Ovary (tissue), 10 donors: ENCODE measurements at regions of chr1 and their contacts with region 1.

Region 1: GRCh38 chr1:111755331-111756123 is at the start of gene DDX20:
- DNase-seq: peak; percentile 90 to 95 (median 93)
- H3K4me3 ChIP-seq: peak within 1 kb of the TSS; percentile 88
- H3K27ac ChIP-seq: peak within 1 kb of the TSS; percentile 83 to 97
- H3K4me1 ChIP-seq: peaks cover 1% of the 10 kb centered on the region
- H3K27me3 ChIP-seq: no peaks in the 10 kb centered on the region
- CTCF ChIP-seq: peak; percentile 96 to 99 (median 97)
- EP300 ChIP-seq: no peak
- POLR2A ChIP-seq: peak; percentile 60
- total RNA-seq, gene DDX20: 10.6 to 26.9 (median 14.5) TPM

Region 2: GRCh38 chr1:111507411-111508201 is 247.9 kb before region 1 on chr1:
- intact Hi-C with region 1: loop called in 3 of 4 experiments (anchors 5 kb)
- DNase-seq: peak in 4 of 5 donors; percentile 70 to 81 (median 74)
- H3K4me3 ChIP-seq: peak overlapping the region; percentile 25
- H3K27ac ChIP-seq: peak overlapping the region; percentile 93 to 96
- H3K4me1 ChIP-seq: peaks cover 8% of the 10 kb centered on the region
- H3K27me3 ChIP-seq: no peaks in the 10 kb centered on the region
- CTCF ChIP-seq: no peak
- EP300 ChIP-seq: no peak
- POLR2A ChIP-seq: no peak

Region 3: GRCh38 chr1:111516005-111516535 is 239.5 kb before region 1 on chr1:
- intact Hi-C with region 1: loop called in 1 of 4 experiments (anchors 5 kb)
- DNase-seq: peak; percentile 64 to 72 (median 69)
- H3K4me3 ChIP-seq: peak overlapping the region; percentile 25
- H3K27ac ChIP-seq: peak overlapping the region; percentile 44 to 53
- H3K4me1 ChIP-seq: peaks cover 13% of the 10 kb centered on the region
- H3K27me3 ChIP-seq: no peaks in the 10 kb centered on the region
- CTCF ChIP-seq: peak in 1 of 3 donors; percentile 36
- EP300 ChIP-seq: no peak
- POLR2A ChIP-seq: no peak

Region 4: DNA sequence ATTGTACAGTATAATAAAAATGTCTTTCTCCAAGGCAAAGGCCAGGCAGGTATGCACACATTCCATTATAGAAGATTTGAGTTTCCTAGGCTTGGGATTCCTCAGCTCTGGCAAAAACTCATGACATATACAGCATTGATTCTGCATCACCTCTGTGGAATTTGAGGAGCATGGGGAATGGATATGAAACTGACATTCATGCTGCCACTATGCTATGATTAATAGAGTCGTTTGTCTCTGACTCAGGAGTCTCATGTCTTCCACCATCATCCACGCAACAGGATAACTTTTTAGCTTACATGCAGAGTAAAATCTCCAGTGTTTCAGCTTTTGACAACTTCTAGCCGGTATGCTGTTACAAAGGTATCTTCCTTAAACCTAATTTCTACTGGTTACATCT is 202.3 kb before region 1 on chr1:
- intact Hi-C with region 1: no loop called
- DNase-seq: no peak
- H3K4me3 ChIP-seq: no peak overlapping the region
- H3K27ac ChIP-seq: no peak overlapping the region
- H3K4me1 ChIP-seq: no peaks in the 10 kb centered on the region
- H3K27me3 ChIP-seq: no peaks in the 10 kb centered on the region
- CTCF ChIP-seq: no peak
- EP300 ChIP-seq: no peak
- POLR2A ChIP-seq: no peak

Region 5: DNA sequence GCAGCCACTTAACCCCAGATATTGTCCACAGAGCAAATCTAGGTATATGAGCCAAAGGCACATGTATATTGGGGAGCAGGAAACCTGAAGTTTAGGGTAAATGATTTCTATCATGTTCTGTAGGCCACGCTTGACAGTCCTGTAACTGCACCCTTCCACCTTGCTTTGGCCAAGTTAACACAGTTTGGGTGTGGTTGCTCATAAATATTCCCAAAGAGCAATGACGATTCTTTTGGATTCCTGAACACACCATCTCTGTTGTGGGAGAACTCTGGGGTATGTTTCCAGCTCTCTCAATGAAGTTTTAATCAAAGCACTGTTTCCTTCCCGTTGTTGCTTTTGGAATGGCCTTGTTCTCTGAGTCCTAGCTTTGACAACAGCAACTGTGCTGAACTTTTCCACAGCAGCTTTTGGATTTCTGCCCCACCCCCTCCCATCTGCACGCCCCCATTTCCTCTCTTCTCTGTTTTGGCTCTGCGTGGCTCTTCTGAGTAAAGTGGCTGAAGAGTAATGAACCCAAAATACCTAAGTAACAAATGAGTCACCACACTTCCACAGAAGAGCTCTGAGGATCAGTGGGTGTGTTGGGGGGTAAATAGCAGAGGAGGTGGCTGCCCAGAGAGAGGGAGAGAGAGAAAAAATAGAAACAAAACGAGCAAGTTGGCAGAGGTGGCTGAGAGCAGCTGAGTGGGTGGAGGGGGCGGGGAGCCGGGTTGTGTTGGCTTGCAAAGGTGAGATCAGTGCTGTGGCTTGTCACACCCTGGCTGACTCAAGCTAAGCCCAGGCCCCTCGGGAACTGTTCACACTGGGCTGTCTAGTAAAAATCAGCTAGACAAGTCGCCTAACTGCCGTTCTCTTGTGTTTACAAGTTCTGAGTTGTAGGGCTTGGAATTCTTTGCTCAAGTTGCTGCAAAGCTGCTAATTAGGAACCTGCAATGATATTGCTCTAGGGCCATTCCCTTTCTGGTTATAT is 162.9 kb before region 1 on chr1:
- intact Hi-C with region 1: loop called in 1 of 4 experiments (anchors 10 kb)
- DNase-seq: peak; percentile 68 to 77 (median 75)
- H3K4me3 ChIP-seq: peak overlapping the region; percentile 7
- H3K27ac ChIP-seq: peak overlapping the region in 1 of 2 donors; percentile 63
- H3K4me1 ChIP-seq: peaks cover 9% of the 10 kb centered on the region
- H3K27me3 ChIP-seq: no peaks in the 10 kb centered on the region
- CTCF ChIP-seq: no peak
- EP300 ChIP-seq: no peak
- POLR2A ChIP-seq: no peak

Region 6: DNA sequence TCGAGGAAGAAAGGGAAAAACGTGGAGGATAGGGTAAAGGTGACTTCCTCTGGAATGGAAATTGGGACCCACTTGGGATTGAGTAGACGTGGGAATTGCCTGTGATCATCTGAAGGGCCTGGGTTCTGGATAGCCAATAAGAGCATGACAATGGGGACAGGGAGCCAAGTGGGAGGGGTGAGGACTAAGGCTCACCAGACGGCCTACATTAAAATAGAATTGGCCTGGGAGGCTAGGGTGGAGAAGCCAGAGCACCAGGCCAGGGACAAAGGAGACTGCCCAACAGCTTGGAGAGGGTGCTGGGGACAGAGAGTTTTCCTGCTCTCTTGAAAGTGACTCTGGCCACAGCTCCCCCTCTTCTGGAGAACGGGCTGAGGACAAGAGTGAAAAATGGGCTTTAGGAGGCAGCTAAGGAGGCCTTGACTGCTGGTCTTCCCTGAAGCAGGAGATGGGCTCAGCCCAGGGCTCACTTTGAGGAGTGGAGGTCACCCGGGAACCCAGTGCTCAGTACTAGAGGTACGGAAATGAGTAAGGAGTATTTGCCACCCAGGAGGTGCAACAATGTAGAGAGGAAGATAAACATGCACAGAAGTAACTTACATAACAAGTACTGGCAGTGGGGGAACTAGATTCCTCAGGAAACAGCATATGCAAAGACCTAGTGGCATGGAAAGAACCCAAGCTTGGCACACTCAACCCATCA is 35.1 kb before region 1 on chr1:
- intact Hi-C with region 1: loop called in 2 of 4 experiments (anchors 2 to 5 kb)
- DNase-seq: no peak
- H3K4me3 ChIP-seq: no peak overlapping the region
- H3K27ac ChIP-seq: no peak overlapping the region
- H3K4me1 ChIP-seq: peaks cover 1% of the 10 kb centered on the region
- H3K27me3 ChIP-seq: no peaks in the 10 kb centered on the region
- CTCF ChIP-seq: no peak
- EP300 ChIP-seq: no peak
- POLR2A ChIP-seq: no peak

Region 7: DNA sequence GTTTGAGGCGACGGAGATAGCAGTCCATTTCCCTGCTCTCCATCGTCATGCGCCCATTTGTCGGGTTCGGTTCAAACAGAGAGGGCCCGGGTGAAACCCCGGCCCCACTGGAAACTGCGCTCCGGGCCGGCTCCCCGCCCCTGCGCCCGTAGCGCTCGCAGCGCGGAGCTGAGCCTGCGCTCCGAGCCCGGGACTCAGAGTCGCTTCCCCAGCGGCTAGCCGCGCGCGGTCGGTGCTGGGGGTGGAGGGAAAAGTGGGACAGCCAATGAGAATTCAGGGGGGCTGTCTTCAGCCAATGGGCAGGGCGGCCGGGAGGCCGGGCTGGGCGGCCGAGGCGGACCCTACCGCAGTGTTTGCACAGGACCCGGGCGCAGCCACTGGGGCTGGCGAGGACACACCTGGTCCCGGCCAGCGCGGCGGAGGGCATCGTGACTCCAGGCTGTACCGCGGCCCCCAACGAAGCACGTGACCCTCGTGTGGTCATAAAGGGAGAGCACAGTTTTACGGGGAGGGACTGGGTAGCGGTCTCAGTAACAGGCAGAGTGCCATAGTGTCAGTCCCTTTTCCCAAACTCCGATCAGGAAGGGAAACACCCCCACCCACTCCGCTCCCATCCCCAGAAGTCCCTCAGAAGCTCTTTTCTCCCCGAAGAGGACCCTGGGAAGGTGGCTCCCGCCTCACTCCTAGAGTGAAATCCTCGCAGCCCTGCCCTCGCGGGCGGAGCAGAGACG is 16.2 kb before region 1 on chr1 and contains the start of gene INKA2:
- intact Hi-C with region 1: loop called in 1 of 4 experiments (anchors 2 kb)
- DNase-seq: peak; percentile 86 to 88 (median 87)
- H3K4me3 ChIP-seq: peak within 1 kb of the TSS; percentile 47
- H3K27ac ChIP-seq: peak within 1 kb of the TSS; percentile 65 to 79
- H3K4me1 ChIP-seq: peaks cover 13% of the 10 kb centered on the region
- H3K27me3 ChIP-seq: no peaks in the 10 kb centered on the region
- CTCF ChIP-seq: peak in 2 of 3 donors; percentile 10 to 21
- EP300 ChIP-seq: no peak
- POLR2A ChIP-seq: peak; percentile 47
- total RNA-seq, gene INKA2: 2.9 to 22.2 (median 10.5) TPM